ENCODE measurements at regions of chr16 and their contacts with region 1.

Region 1: DNA sequence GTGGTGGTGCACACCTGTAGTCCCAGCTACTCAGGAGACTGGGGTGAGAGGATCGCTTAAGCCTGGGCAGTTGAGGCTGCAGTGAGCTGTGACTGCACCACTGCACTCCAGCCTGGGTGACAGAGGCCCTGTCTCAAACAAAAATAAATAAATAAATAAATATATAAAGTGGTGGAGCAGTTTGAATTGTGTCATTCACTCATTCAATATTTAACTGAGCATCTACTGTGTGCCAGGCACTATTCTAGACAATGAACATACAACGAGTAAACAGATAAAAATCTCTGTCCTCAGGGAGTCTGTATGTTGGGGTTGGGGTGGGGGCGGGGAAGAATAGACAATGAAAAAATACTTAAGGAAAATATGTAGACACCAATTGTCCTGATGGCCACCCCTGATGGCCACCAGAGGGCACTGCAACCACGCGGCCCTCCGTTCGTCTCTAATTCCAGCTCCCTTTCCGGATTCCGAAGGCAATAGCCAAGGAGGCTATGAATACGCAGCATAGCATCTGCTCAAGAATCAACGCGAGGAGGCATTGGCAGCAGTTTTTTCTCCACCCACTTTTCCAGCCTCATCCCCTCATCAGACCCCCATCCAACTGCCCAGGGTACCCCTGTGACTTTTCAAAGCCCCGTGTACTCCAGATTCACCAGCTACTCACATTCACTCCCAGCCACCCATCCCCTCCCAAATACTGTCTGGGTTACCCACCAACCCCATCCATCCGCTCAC is 21.4 kb downstream of the QPRT start:
- DNase-seq: peak; percentile 79
- ATAC-seq: peak; percentile 83 to 92

Region 2: DNA sequence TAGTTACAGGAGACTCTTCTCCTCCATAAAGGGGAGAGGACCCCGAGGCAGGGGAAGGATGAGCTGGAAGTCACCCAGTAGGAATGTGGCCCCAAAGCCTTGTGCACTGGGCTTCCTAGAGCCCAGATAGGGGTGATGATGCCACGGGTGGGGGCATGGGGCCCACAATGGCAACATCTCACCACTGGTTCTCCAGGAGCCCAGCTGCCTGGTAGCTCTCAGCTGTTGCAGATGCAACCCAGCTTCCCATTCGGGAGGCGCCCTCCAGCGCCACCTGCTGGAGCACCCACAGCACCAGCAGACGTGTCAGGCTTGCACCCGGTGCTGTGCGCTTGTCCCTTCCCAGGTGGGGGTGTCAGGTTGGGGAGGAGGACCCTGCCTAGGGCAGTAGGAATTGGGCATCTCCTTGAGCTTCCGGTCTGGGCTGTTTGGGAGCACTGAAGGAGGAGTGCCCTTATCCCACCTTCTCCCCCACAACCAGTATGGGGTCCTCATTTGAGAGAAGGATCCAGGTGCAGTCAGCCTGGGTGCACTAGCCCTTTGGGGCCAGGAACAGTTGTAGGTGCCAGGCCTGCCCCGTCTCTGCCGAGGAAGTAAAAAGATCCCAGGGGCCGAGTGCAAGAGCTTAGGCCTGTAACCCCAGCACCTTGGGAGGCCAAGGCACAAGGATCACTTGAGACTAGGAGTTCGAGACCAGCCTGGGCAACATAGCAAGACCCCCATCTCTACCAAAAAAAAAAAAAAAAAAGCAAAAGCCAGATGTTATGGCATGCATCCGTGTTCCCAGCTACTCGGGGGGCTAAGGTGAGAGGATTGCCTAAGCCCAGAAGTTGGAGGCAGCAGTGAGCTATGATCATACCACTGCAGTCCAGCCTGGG is 148.2 kb after region 1 on chr16:
- intact Hi-C with region 1: loop called in 1 of 2 experiments (anchors 10 kb)
- DNase-seq: peak; percentile 81
- ATAC-seq: peak; percentile 72 to 80

Region 3: DNA sequence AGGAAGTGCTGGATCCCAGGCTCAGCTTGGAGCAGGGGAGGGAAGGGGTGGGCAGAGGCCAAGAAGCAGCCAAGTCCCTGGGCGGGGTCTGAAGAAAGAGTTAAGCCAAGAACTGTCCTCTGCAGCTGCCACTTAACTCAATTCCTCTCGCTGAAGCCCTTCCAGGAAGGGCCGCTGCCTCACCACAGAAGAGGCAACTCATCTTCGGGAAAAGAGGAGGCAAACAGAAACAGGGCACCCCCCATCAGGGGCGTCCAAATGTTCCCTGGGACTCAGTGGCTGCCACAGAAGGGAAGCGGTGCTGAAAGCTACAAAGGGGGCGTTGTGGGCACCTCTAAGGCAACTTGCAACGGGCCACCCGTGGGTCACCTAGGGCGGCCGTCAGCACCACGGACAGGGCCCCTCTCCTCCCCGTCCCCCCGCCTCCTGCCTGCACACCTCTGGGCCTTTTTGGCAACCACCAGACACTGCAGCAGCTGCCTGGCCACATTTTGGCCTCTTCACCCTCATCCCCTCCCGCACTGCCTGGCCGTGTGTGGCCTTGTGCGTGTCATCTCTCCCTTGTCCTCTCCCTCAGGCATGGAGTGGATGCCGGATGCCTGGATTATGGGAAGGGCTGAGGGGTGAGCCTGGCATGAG is 328.1 kb after region 1 on chr16:
- intact Hi-C with region 1: loop called (anchors 5 to 10 kb)
- DNase-seq: no peak
- ATAC-seq: peak; percentile 26 to 60